ENCODE measurements at regions of chr2 and their contacts with region 1.

Region 1: DNA sequence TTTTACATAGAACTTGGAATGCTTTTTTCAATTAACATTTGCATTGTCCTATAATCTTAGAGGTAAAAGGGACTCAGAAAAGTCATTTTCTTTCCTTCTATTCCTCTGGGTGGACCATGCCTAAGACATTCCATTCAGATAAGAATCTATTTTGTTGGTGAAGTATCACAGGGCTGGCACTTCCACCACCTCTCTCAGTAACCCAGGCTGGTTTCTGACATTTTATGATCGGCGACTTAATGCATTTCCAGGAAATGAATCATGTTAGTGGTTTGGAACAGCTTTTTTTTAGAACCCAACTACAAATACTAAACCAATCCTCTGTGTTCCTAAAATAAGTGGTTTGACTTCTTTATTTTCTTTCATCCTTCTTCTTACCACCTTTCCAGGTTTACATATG is 27.0 kb downstream of the GAD1 start:
- DNase-seq: no peak
- H3K4me3 ChIP-seq: no peak overlapping the region
- H3K27ac ChIP-seq: no peak overlapping the region
- H3K4me1 ChIP-seq: no peaks in the 10 kb centered on the region
- H3K27me3 ChIP-seq: peaks cover 0 to 2% (median 0%) of the 10 kb centered on the region in 4 experiments; a peak in 1 of 7 replicates
- CTCF ChIP-seq: no peak
- EP300 ChIP-seq: no peak
- POLR2A ChIP-seq: no peak
- RAD21 ChIP-seq: no peak

Region 2: GRCh38 chr2:170829036-170829435 is 14.6 kb before region 1 on chr2:
- CTCF ChIA-PET with region 1: interaction called, 25 read pairs
- POLR2A ChIA-PET with region 1: interaction called, 3 read pairs
- DNase-seq: no peak
- H3K4me3 ChIP-seq: no peak overlapping the region
- H3K27ac ChIP-seq: no peak overlapping the region
- H3K4me1 ChIP-seq: peaks cover 0 to 3% (median 3%) of the 10 kb centered on the region in 4 experiments; a peak in 5 of 7 replicates
- H3K27me3 ChIP-seq: peaks cover 4 to 34% (median 29%) of the 10 kb centered on the region in 4 experiments
- CTCF ChIP-seq: no peak
- EP300 ChIP-seq: no peak
- POLR2A ChIP-seq: no peak
- RAD21 ChIP-seq: no peak

Region 3: DNA sequence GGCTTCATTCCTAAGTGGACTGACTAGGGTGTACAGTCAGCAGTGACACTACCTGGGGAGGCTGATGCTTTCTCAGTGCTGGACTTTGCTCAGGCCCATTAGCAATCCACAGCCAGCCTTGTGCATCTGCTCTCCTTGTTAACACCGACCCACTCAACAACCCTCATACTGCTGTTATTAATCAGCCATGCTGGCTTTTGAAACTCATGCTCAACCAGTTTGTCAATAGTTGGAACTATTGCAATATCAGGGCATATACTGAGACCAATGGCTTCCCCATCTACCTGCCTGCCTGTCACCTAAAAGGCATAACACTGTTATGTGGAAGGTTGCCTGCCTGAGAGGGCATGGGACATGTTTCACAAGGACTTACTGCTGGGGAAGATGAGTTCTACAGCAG is 12.4 kb after region 1 on chr2:
- CTCF ChIA-PET with region 1: interaction called, 15 read pairs
- POLR2A ChIA-PET with region 1: interaction called, 3 read pairs
- DNase-seq: no peak
- H3K4me3 ChIP-seq: no peak overlapping the region
- H3K27ac ChIP-seq: no peak overlapping the region
- H3K4me1 ChIP-seq: no peaks in the 10 kb centered on the region
- H3K27me3 ChIP-seq: no peaks in the 10 kb centered on the region
- CTCF ChIP-seq: no peak
- EP300 ChIP-seq: no peak
- POLR2A ChIP-seq: no peak
- RAD21 ChIP-seq: no peak

Region 4: GRCh38 chr2:170886386-170886785 is 42.7 kb after region 1 on chr2:
- CTCF ChIA-PET with region 1: interaction called, 15 read pairs
- POLR2A ChIA-PET with region 1: no interaction called
- DNase-seq: no peak
- H3K4me3 ChIP-seq: no peak overlapping the region
- H3K27ac ChIP-seq: no peak overlapping the region
- H3K4me1 ChIP-seq: peaks cover 0 to 4% (median under 1%) of the 10 kb centered on the region in 4 experiments; a peak in 2 of 7 replicates
- H3K27me3 ChIP-seq: no peaks in the 10 kb centered on the region
- CTCF ChIP-seq: no peak
- EP300 ChIP-seq: no peak
- POLR2A ChIP-seq: no peak
- RAD21 ChIP-seq: no peak

Region 5: GRCh38 chr2:171124541-171124940 is 280.9 kb after region 1 on chr2:
- CTCF ChIA-PET with region 1: no interaction called
- POLR2A ChIA-PET with region 1: no interaction called
- DNase-seq: no peak
- H3K4me3 ChIP-seq: no peak overlapping the region
- H3K27ac ChIP-seq: no peak overlapping the region
- H3K4me1 ChIP-seq: no peaks in the 10 kb centered on the region
- H3K27me3 ChIP-seq: no peaks in the 10 kb centered on the region
- CTCF ChIP-seq: no peak
- EP300 ChIP-seq: no peak
- POLR2A ChIP-seq: no peak
- RAD21 ChIP-seq: no peak